Right ventricle myocardium inferior (tissue), 1 donor: ENCODE measurements at regions of chr16 and their contacts with region 1.

Region 1: DNA sequence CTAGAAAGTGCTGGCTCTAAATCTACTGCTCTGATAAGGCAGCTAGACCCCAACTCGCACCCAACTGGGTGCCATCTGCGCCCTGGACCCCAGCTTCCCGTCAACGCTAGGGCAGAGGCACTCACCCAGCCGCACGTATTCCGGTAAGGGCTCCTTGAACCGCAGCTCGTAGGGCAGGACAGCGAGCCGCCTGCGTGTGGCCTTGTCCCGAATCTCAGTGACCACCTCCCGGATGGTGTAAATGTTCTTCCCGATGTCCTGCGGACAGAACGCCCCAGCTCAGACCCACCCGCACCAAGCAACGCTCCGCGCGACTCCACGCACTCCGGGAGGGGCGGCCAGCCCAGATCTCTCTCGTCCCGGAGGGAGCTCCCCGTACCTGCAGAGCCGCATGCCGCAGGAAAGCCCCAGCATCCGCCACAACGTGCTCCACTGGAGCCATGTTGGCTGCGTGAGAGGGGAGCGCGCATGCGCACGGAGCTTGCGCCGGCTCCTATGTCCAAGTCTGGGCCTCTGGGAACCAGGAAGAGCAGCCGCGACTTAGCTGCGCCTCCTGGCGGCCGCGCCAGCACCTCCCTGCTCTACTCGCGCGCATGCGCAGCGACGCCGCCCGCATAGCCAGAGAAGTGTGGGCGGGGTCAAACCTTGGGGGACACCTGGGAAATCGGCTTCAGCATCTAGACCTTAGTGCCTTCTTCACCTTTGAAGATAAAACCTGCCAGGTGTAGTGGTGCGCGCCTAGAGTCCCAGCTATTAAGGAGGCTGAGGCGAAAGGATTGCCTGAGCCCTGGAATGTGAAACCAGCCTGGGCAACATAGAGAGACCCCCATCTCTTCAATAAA is at the start of gene NOB1:
- DNase-seq: peak; percentile 99
- ATAC-seq: peak; percentile 98
- total RNA-seq, gene NOB1: 15.9 TPM

Region 2: GRCh38 chr16:69260019-69260418 is 494.7 kb before region 1 on chr16:
- intact Hi-C with region 1: no loop called
- DNase-seq: no peak
- ATAC-seq: no peak

Region 3: GRCh38 chr16:69310653-69311532 is 443.8 kb before region 1 on chr16 and contains the start of gene VPS4A:
- intact Hi-C with region 1: no loop called
- DNase-seq: peak; percentile 98
- ATAC-seq: peak; percentile 97
- total RNA-seq, gene VPS4A: 29.6 TPM

Region 4: GRCh38 chr16:69386596-69386995 is 368.1 kb before region 1 on chr16:
- intact Hi-C with region 1: loop called (anchors 5 kb)
- DNase-seq: no peak
- ATAC-seq: no peak

Region 5: GRCh38 chr16:69672998-69673713 is 81.5 kb before region 1 on chr16:
- intact Hi-C with region 1: no loop called
- DNase-seq: no peak
- ATAC-seq: no peak

Region 6: GRCh38 chr16:69709456-69710084 is 45.1 kb before region 1 on chr16:
- intact Hi-C with region 1: loop called (anchors 1 kb)
- DNase-seq: no peak
- ATAC-seq: peak; percentile 36